ENCODE measurements at regions of chr20 and their contacts with region 1.

Region 1: DNA sequence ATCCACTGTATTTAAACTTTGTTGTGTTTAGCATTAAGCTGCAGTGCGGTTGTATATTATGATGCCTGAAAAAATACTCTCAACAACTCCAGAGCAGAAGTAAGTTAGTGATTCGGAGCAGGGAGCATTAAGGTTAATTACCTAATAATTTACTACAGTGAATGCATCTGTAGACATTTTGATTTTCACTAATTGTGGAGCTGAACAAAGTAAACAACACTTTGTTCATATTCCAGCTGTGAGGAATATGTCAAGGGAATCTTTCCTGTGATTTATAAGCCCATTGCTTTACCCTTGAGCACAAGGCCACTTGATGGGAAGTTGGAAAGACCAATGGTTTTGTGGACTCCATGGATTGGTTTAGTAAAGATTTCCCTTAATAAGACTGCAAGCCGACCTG is 77.1 kb downstream of the CBLN4 start:
- DNase-seq: no peak
- H3K27ac ChIP-seq: no peak overlapping the region
- CTCF ChIP-seq: no peak

Region 2: DNA sequence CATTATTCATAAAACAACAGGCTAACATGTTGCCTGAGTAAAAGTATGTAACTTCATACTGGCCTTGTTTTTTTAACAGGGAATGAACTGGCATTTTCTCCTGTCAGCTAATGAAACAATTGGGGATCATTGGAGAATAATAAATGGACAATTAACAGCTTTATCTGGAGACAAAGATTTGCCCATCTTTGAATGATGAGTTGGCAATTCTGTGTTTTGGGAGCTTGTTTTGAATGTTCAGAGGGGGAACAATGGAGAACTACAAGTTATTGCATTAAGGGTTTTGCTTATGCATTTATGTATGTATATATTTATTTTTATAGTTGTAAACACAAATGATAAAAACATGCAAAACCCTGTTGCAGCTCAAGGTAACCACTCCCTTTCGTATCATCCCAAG is 73.2 kb before region 1 on chr20:
- CTCF ChIA-PET with region 1: interaction called, 10 read pairs
- POLR2A ChIA-PET with region 1: no interaction called
- DNase-seq: no peak
- H3K27ac ChIP-seq: no peak overlapping the region
- CTCF ChIP-seq: no peak